CD4-positive, alpha-beta memory T cell (primary cell): ENCODE measurements at regions of chr1 and their contacts with region 1.

Region 1: DNA sequence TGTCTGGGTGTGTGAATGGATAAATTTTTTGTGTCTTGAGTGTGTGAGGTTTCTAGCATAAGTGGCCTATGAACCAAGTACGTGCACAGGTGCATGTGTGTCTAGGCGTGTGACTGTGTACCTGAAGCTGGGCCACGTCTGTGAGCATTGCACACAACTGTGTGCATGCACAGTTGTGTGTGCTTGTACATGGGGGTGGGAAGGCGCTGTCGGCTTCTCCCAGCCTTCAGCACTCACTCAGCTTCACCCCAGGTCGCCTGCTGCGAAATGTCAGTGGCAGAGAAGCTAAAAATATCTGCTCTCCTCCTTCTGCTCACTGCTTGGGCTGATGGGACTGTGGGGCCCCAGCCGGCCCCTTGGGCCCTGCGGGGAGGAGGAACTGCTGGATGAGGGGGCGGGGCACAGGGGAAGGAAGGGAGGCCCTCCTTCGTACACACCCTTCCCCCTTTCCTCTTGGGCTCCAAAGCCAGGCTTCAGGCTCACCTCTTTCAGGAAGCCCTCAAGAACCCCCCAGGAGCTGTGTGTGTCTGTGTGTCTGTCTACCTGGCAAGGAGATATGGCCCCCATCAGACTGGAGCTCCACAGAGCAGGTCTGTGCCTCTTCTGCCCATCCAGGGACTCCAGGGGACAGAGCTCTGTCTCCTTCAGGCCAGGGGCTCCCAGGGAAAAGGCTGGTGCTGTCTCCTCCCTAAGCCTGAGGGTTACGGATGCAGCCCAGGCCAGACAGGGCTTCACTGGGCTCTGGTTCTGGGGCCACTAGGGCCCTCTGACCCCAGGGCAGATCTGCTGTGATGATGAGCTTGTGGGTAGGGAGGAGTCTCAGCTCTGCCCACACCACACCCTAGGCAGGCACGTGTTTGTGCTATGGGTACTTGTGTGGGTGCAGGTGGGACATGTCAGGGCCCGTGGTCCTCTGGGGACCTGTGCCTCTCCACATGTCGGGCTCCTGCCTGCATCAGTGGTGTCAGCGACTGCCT is 35.6 kb upstream of the WASF2 start:
- DNase-seq: peak; percentile 28 to 54 (median 43)
- H3K4me3 ChIP-seq: peak overlapping the region; percentile 22 to 50
- H3K4me3 Mint-ChIP-seq: peak overlapping the region; percentile 36 to 92 (median 77)
- H3K27ac ChIP-seq: peak overlapping the region; percentile 62
- H3K27ac Mint-ChIP-seq: peak overlapping the region; percentile 77 to 96 (median 93)
- H3K4me1 ChIP-seq: peaks cover 81% of the 10 kb centered on the region
- H3K4me1 Mint-ChIP-seq: peaks cover 53 to 78% (median 66%) of the 10 kb centered on the region in 4 donors
- H3K27me3 ChIP-seq: no peaks in the 10 kb centered on the region
- H3K27me3 Mint-ChIP-seq: no peaks in the 10 kb centered on the region

Region 2: DNA sequence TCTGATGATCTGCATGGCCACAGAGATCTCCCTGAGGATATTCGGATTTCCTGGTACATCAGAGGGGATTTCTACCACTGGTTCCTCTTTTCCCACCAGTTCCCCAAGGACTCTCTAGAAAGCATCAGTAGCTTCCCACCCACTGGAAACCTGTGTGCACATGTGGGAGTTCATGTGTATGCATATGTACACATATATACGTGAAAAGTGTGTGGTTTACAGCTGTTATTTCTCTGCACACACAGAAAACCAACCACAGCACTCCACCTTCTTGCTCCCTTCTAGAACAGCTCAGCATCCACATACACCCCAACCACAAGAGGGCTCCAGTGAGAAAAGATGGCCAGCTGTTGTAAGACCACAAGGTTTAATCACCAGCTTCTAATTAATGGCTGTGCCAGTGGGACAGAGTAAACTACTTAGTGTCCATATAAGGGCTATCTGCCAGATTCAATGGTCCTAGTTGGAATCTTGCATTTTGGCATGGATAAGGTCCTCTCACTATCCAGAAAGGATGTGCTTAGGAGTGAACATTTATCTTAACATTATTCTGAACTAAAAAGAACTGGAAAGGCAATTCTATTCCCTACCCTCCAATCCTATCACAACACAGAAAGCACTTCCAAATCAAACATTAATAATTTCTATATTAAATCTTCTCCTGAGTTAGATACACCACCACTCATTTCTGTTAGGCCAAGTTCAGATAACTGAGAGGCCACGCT is 109.0 kb before region 1 on chr1:
- CTCF ChIA-PET with region 1: interaction called, 4 read pairs
- POLR2A ChIA-PET with region 1: interaction called, 7 read pairs
- intact Hi-C with region 1: loop called (anchors 5 kb)
- DNase-seq: peak; percentile 51 to 67 (median 60)
- H3K4me3 ChIP-seq: no peak overlapping the region
- H3K4me3 Mint-ChIP-seq: no peak overlapping the region
- H3K27ac ChIP-seq: no peak overlapping the region
- H3K27ac Mint-ChIP-seq: peak overlapping the region; percentile 29 to 75 (median 42)
- H3K4me1 ChIP-seq: peaks cover 42% of the 10 kb centered on the region
- H3K4me1 Mint-ChIP-seq: peaks cover 19 to 42% (median 30%) of the 10 kb centered on the region in 4 donors
- H3K27me3 ChIP-seq: no peaks in the 10 kb centered on the region
- H3K27me3 Mint-ChIP-seq: no peaks in the 10 kb centered on the region

Region 3: DNA sequence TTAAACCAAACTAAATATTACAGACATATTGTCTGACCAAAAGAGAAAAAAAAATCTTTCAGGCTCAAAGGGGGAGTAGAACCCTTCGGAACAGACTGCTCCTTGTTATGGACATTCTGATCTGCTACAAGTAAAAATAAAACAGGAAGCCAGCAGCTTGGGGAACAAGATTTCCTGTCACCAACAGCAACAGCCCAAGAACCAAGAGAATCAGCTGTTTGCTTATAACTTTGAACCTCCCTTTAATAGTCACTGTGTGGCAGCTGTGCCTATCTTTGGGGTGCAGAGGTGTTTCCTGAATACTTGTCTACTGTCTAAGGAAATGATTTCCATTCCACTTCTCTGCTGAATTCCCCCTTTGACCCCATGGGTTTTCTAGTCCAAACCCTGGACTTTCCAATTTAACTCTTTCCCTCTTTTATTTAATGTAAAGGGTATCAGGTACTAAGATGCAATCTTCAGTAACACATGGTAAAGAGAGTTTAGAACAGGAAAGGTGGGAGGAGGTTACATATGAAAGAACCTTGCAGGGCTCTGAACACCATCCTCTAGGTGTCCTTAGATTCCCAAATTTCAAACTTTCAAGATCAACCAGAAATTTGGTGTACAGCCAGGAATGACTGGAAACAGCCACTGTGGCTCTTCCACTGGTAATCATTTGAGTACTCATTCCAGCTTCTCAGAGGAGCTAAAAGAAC is 94.5 kb before region 1 on chr1:
- CTCF ChIA-PET with region 1: interaction called, 5 read pairs
- POLR2A ChIA-PET with region 1: interaction called, 4 read pairs
- intact Hi-C with region 1: loop called (anchors 5 kb)
- DNase-seq: peak in 4 of 5 donors; percentile 46 to 61 (median 56)
- H3K4me3 ChIP-seq: peak overlapping the region in 1 of 2 donors; percentile 5
- H3K4me3 Mint-ChIP-seq: peak overlapping the region; percentile 53 to 88 (median 77)
- H3K27ac ChIP-seq: peak overlapping the region; percentile 24
- H3K27ac Mint-ChIP-seq: peak overlapping the region; percentile 64 to 94 (median 87)
- H3K4me1 ChIP-seq: peaks cover 98% of the 10 kb centered on the region
- H3K4me1 Mint-ChIP-seq: peaks cover 56 to 86% (median 73%) of the 10 kb centered on the region in 4 donors
- H3K27me3 ChIP-seq: no peaks in the 10 kb centered on the region
- H3K27me3 Mint-ChIP-seq: no peaks in the 10 kb centered on the region

Region 4: GRCh38 chr1:27489910-27490741 is 35.5 kb before region 1 on chr1 and contains the start of gene WASF2:
- CTCF ChIA-PET with region 1: interaction called, 3 read pairs
- POLR2A ChIA-PET with region 1: interaction called, 81 read pairs
- intact Hi-C with region 1: loop called (anchors 1 kb)
- DNase-seq: peak; percentile 97 to 98 (median 97)
- H3K4me3 ChIP-seq: peak within 1 kb of the TSS; percentile 44 to 100
- H3K4me3 Mint-ChIP-seq: peak within 1 kb of the TSS; percentile 95 to 100 (median 97)
- H3K27ac ChIP-seq: peak within 1 kb of the TSS; percentile 87
- H3K27ac Mint-ChIP-seq: peak within 1 kb of the TSS; percentile 97 to 99 (median 99)
- H3K4me1 ChIP-seq: peaks cover 32% of the 10 kb centered on the region
- H3K4me1 Mint-ChIP-seq: peaks cover 18 to 45% (median 26%) of the 10 kb centered on the region in 4 donors
- H3K27me3 ChIP-seq: no peaks in the 10 kb centered on the region
- H3K27me3 Mint-ChIP-seq: peaks cover 0 to 3% of the 10 kb centered on the region in 2 donors
- total RNA-seq, gene WASF2: 163 to 164 TPM

Region 5: GRCh38 chr1:27568300-27569087 is 42.9 kb after region 1 on chr1:
- CTCF ChIA-PET with region 1: interaction called, 20 read pairs
- POLR2A ChIA-PET with region 1: interaction called, 12 read pairs
- intact Hi-C with region 1: loop called (anchors 5 kb)
- DNase-seq: peak; percentile 92 to 94 (median 93)
- H3K4me3 ChIP-seq: peak overlapping the region in 1 of 2 donors; percentile 55
- H3K4me3 Mint-ChIP-seq: peak overlapping the region; percentile 66 to 92 (median 84)
- H3K27ac ChIP-seq: peak overlapping the region; percentile 60
- H3K27ac Mint-ChIP-seq: peak overlapping the region; percentile 71 to 92 (median 86)
- H3K4me1 ChIP-seq: peaks cover 27% of the 10 kb centered on the region
- H3K4me1 Mint-ChIP-seq: peaks cover 16 to 39% (median 22%) of the 10 kb centered on the region in 4 donors
- H3K27me3 ChIP-seq: no peaks in the 10 kb centered on the region
- H3K27me3 Mint-ChIP-seq: no peaks in the 10 kb centered on the region

Region 6: GRCh38 chr1:27719286-27720251 is 194.0 kb after region 1 on chr1:
- CTCF ChIA-PET with region 1: no interaction called
- POLR2A ChIA-PET with region 1: no interaction called
- intact Hi-C with region 1: no loop called
- DNase-seq: peak in 3 of 5 donors; percentile 7 to 19 (median 11)
- H3K4me3 ChIP-seq: no peak overlapping the region
- H3K4me3 Mint-ChIP-seq: no peak overlapping the region
- H3K27ac ChIP-seq: no peak overlapping the region
- H3K27ac Mint-ChIP-seq: peak overlapping the region in 2 of 7 donors; percentile 38 to 43
- H3K4me1 ChIP-seq: no peaks in the 10 kb centered on the region
- H3K4me1 Mint-ChIP-seq: peaks cover 0 to 2% (median 0%) of the 10 kb centered on the region in 4 donors
- H3K27me3 ChIP-seq: no peaks in the 10 kb centered on the region
- H3K27me3 Mint-ChIP-seq: peaks cover 18 to 20% of the 10 kb centered on the region in 2 donors